ENCODE measurements at regions of chr16 and their contacts with region 1.

Region 1: DNA sequence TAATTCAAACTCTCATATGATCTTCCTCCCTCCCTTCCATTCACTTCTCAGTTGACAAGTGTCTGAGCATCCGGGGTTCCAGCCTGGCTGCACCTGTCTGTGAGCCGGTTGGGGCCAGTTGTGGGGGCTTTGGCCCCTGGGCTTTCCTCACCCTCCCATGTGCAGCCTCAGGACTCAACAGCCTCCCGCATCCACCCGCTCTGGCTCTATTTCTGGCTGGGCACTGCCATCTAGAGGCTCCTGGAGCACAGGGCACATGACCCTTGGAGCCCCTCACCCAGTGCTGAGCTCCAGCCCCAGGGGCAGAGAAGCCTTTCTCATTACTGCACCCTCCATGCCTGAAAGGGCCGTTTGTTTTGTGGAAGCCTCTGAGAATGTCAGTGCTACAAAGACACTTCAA is 43.3 kb downstream of the HAPSTR1 start:
- DNase-seq: peak in 1 of 2 experiments; percentile 79
- H3K4me3 ChIP-seq: no peak overlapping the region
- H3K27ac ChIP-seq: no peak overlapping the region
- H3K4me1 ChIP-seq: no peaks in the 10 kb centered on the region; a peak in 2 of 7 replicates
- H3K27me3 ChIP-seq: no peaks in the 10 kb centered on the region
- CTCF ChIP-seq: peak; percentile 76 to 86 (median 84)
- EP300 ChIP-seq: no peak
- POLR2A ChIP-seq: no peak
- RAD21 ChIP-seq: peak; percentile 89 to 94

Region 2: DNA sequence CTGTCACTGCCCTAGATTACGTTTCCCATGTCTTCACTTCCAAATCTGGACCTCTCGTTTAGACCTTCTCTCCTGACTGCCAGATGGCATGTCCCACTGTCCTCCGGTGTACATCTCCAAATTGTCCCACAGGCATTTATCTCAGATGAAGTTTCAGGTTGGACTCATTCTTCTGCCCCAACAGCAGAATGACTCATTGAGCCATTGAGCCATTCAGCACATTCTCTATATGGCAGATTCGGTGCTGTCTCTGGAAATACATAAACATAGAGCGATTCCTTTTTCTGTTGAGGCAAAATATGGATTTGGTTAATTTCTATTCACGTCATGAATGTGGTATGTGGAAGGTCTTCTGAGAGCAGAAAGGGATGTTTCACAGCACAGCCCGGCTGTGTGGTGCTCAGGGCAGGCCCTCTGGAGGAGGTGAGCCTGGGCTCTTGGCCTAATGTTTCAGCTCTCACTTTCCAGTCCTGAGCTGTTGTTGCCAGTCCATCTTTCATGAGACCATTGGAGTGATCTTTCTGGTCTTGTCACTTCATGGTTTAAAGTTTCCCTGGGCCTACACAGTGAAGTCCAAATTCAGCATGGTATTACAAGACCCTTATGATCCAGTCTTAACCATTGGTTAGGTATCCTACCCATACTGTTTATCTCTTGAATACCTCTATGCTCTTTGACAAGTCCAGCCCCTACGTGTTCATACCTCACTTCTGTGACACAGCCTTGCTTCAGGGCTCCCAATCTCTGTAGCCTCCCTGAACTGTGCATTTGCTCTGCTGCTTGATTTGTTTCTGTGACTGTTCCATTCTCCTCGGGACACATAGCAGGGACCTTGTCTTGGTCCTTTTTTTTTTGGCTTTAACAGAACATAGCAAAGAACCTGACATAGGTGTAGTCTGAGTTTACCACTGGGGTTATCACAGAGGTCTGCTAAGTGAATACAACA is 27.4 kb before region 1 on chr16:
- CTCF ChIA-PET with region 1: interaction called, 12 read pairs
- POLR2A ChIA-PET with region 1: interaction called, 5 read pairs
- DNase-seq: no peak
- H3K4me3 ChIP-seq: no peak overlapping the region
- H3K27ac ChIP-seq: no peak overlapping the region
- H3K4me1 ChIP-seq: peaks cover 3 to 17% (median 15%) of the 10 kb centered on the region in 4 experiments
- H3K27me3 ChIP-seq: no peaks in the 10 kb centered on the region
- CTCF ChIP-seq: no peak
- EP300 ChIP-seq: no peak
- POLR2A ChIP-seq: no peak
- RAD21 ChIP-seq: no peak

Region 3: DNA sequence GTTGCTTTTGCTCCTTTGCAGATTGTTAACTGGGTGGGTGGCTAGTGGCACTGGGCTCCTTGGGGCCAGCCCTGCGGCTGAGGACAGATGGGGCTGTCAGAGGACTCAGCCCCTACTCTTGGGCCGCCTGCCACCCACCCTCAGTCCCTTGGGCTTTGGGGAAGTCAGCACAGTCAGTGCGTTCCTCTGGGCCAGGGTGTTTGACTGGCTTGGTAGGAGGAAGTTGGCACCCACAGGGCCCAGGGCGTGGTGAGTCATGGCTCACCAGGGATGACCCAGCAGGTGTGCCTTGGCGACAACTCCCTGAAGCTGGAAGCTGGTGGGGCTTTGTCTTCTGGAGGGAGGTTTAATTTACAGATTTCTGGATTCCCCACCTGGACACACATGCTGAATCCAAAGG is 10.9 kb before region 1 on chr16:
- CTCF ChIA-PET with region 1: interaction called, 39 read pairs
- POLR2A ChIA-PET with region 1: interaction called, 5 read pairs
- DNase-seq: peak in 1 of 2 experiments; percentile 33
- H3K4me3 ChIP-seq: no peak overlapping the region
- H3K27ac ChIP-seq: no peak overlapping the region; the same call in 1 of the 2 replicates
- H3K4me1 ChIP-seq: peaks cover 0 to 11% (median 7%) of the 10 kb centered on the region in 4 experiments; a peak in 5 of 7 replicates
- H3K27me3 ChIP-seq: no peaks in the 10 kb centered on the region
- CTCF ChIP-seq: no peak
- EP300 ChIP-seq: no peak
- POLR2A ChIP-seq: no peak
- RAD21 ChIP-seq: no peak

Region 4: GRCh38 chr16:9151597-9151996 is 16.9 kb after region 1 on chr16:
- CTCF ChIA-PET with region 1: interaction called, 14 read pairs
- POLR2A ChIA-PET with region 1: interaction called, 3 read pairs
- DNase-seq: no peak
- H3K4me3 ChIP-seq: no peak overlapping the region
- H3K27ac ChIP-seq: no peak overlapping the region
- H3K4me1 ChIP-seq: peaks cover 10 to 22% (median 16%) of the 10 kb centered on the region in 4 experiments; a peak in 6 of 7 replicates
- H3K27me3 ChIP-seq: no peaks in the 10 kb centered on the region
- CTCF ChIP-seq: no peak
- EP300 ChIP-seq: no peak
- POLR2A ChIP-seq: no peak
- RAD21 ChIP-seq: no peak